Upper lobe of right lung (tissue), 1 donor: ENCODE measurements at regions of chr16 and their contacts with region 1.

Region 1: GRCh38 chr16:48824271-48824670 is 214.3 kb upstream of the N4BP1 start:
- DNase-seq: no peak
- ATAC-seq: no peak
- H3K4me3 ChIP-seq: no peak overlapping the region
- H3K27ac ChIP-seq: no peak overlapping the region
- H3K4me1 ChIP-seq: no peaks in the 10 kb centered on the region
- H3K27me3 ChIP-seq: no peaks in the 10 kb centered on the region
- CTCF ChIP-seq: no peak

Region 2: GRCh38 chr16:48918520-48919258 is 94.4 kb after region 1 on chr16:
- intact Hi-C with region 1: loop called (anchors 5 kb)
- DNase-seq: no peak
- ATAC-seq: peak; percentile 38
- H3K4me3 ChIP-seq: no peak overlapping the region
- H3K27ac ChIP-seq: no peak overlapping the region
- H3K4me1 ChIP-seq: no peaks in the 10 kb centered on the region
- H3K27me3 ChIP-seq: no peaks in the 10 kb centered on the region
- CTCF ChIP-seq: no peak

Region 3: GRCh38 chr16:48946686-48947370 is 122.6 kb after region 1 on chr16:
- intact Hi-C with region 1: no loop called
- DNase-seq: no peak
- ATAC-seq: no peak
- H3K4me3 ChIP-seq: no peak overlapping the region
- H3K27ac ChIP-seq: no peak overlapping the region
- H3K4me1 ChIP-seq: no peaks in the 10 kb centered on the region
- H3K27me3 ChIP-seq: no peaks in the 10 kb centered on the region
- CTCF ChIP-seq: no peak

Region 4: GRCh38 chr16:49168126-49168525 is 343.9 kb after region 1 on chr16:
- intact Hi-C with region 1: no loop called
- DNase-seq: no peak
- ATAC-seq: no peak
- H3K4me3 ChIP-seq: no peak overlapping the region
- H3K27ac ChIP-seq: no peak overlapping the region
- H3K4me1 ChIP-seq: no peaks in the 10 kb centered on the region
- H3K27me3 ChIP-seq: no peaks in the 10 kb centered on the region
- CTCF ChIP-seq: no peak